Mammary epithelial cell (primary cell): ENCODE measurements at regions of chr6 and their contacts with region 1.

Region 1: DNA sequence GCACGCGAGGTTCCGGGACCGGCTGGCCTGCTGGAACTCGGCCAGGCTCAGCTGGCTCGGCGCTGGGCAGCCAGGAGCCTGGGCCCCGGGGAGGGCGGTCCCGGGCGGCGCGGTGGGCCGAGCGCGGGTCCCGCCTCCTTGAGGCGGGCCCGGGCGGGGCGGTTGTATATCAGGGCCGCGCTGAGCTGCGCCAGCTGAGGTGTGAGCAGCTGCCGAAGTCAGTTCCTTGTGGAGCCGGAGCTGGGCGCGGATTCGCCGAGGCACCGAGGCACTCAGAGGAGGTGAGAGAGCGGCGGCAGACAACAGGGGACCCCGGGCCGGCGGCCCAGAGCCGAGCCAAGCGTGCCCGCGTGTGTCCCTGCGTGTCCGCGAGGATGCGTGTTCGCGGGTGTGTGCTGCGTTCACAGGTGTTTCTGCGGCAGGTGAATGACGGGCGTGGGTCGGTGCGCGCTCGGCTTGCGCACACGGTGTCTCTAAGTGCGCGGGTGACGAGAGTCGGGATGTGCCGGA is at the start of gene CDKN1A:
- DNase-seq: peak; percentile 94
- H3K4me3 ChIP-seq: peak within 1 kb of the TSS; percentile 91 to 98 (median 96)
- H3K27ac ChIP-seq: peak within 1 kb of the TSS; percentile 93
- H3K4me1 ChIP-seq: peaks cover 59% of the 10 kb centered on the region
- H3K27me3 ChIP-seq: no peaks in the 10 kb centered on the region
- CTCF ChIP-seq: no peak
- total RNA-seq, gene CDKN1A: 687 to 707 TPM

Region 2: DNA sequence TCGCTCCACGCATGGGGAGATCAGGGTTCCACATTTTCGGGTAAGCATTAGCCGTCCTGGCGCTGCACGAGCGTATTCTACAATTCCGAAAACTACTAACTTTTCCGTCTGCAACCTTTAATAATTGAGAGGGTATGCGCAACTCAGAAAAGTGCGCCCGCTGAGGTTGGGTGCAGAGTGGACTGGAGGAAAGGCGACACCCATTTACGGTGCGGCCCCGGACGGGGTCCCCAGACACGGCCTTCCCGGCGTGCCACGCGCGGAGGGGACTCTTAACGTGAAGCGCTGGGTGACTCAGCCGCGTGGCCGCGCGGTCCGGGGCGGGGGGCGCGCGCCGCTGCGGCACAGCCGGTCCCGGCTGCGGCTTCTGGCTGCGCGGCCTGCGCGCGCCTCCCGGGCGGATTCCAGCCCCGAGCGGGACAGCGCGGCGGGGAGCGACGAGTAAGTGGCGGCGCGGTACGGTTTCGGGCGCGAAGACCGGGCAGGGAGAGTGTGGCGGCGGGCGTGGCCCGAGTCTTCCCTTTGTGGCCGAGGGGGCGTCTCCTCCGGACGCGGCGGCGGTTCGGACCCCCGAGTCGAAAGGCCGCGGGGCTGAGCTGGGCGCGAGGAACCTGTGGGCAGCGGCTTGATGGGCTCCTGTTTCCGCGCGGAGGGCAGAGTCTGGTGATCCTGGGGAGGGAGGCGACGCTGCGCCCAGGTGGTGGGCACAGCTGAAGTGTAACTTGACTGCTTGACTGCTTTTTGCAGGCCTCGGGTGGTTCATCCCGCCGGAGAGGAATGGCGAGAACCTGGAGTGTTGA is 235.7 kb before region 1 on chr6 and contains the starts of genes KCTD20 and PXT1:
- CTCF ChIA-PET with region 1: no interaction called
- dilution Hi-C with region 1: no loop called
- in situ Hi-C with region 1: no loop called
- intact Hi-C with region 1: loop called (anchors 2 kb)
- DNase-seq: peak; percentile 83
- H3K4me3 ChIP-seq: peak within 1 kb of the TSS; percentile 61 to 96 (median 83)
- H3K27ac ChIP-seq: peak within 1 kb of the TSS; percentile 94
- H3K4me1 ChIP-seq: peaks cover 24% of the 10 kb centered on the region
- H3K27me3 ChIP-seq: no peaks in the 10 kb centered on the region
- CTCF ChIP-seq: peak in 1 of 2 donors; percentile 4
- total RNA-seq, gene KCTD20: 18.0 to 31.8 TPM
- total RNA-seq, gene PXT1: under 0.01 to 0.16 TPM

Region 3: GRCh38 chr6:36615018-36615761 is 63.4 kb before region 1 on chr6:
- CTCF ChIA-PET with region 1: no interaction called
- dilution Hi-C with region 1: loop called (anchors 5 kb)
- in situ Hi-C with region 1: loop called (anchors 5 to 10 kb)
- intact Hi-C with region 1: loop called (anchors 1 kb)
- DNase-seq: peak; percentile 65
- H3K4me3 ChIP-seq: no peak overlapping the region
- H3K27ac ChIP-seq: no peak overlapping the region
- H3K4me1 ChIP-seq: peaks cover 15% of the 10 kb centered on the region
- H3K27me3 ChIP-seq: no peaks in the 10 kb centered on the region
- CTCF ChIP-seq: peak; percentile 82 to 83

Region 4: DNA sequence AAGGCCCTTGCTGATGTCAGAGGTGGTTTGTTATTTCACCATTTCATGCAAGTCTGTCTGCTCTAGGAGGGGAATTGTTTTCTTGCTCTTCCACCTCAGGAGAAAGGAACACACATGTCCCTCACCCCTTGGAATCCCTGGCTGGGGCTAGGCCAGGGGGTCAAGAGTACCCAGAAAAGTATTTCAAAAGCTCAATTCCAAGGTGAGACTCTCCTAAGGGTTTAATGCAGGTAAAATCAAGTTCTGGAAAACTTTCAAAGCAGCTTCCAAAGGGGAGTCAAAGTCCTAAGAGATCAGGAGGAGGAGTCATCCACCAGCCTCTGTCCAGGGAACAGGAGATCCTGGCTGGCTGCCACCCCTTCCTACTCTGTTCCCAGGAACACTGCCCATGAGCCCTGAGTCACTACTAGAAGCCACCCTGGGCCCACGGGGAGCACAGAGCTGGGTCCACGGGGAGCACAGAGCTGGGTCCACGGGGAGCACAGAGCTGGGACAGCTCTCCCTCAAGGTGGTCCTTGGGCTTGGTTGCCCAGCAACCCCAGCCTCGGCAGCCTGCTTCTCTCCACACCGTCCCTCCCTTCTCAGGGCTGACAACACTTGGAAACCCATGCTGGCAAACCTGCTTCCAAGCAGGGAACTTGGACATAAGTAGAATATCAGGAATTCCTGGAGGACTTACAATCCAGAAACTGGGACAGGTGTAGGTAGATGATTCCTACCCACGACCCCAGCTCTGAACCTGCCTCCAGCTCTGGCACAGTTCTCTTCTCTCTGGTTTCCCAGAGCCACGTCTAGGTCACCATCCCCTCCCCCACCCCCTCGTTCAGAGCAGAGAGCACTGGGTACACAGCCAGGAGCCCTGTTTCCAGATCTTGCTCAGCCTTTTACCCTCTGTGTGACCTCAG is 35.4 kb before region 1 on chr6:
- CTCF ChIA-PET with region 1: no interaction called
- dilution Hi-C with region 1: no loop called
- in situ Hi-C with region 1: no loop called
- intact Hi-C with region 1: loop called (anchors 1 kb)
- DNase-seq: peak; percentile 77
- H3K4me3 ChIP-seq: no peak overlapping the region
- H3K27ac ChIP-seq: no peak overlapping the region
- H3K4me1 ChIP-seq: peaks cover 21% of the 10 kb centered on the region
- H3K27me3 ChIP-seq: no peaks in the 10 kb centered on the region
- CTCF ChIP-seq: no peak

Region 5: GRCh38 chr6:36724514-36725390 is 46.2 kb after region 1 on chr6:
- CTCF ChIA-PET with region 1: no interaction called
- dilution Hi-C with region 1: no loop called
- in situ Hi-C with region 1: no loop called
- intact Hi-C with region 1: loop called (anchors 1 kb)
- DNase-seq: peak; percentile 63
- H3K4me3 ChIP-seq: no peak overlapping the region
- H3K27ac ChIP-seq: no peak overlapping the region
- H3K4me1 ChIP-seq: peaks cover 18% of the 10 kb centered on the region
- H3K27me3 ChIP-seq: no peaks in the 10 kb centered on the region
- CTCF ChIP-seq: peak; percentile 78 to 80